Pancreas (tissue), 10 donors: ENCODE measurements at regions of chr5 and their contacts with region 1.

Region 1: GRCh38 chr5:54243473-54244080 is 66.8 kb downstream of the ARL15 start:
- DNase-seq: peak in 1 of 6 donors; percentile 16
- ATAC-seq: peak in 3 of 4 donors; percentile 57 to 83 (median 65)
- H3K4me3 ChIP-seq: no peak overlapping the region
- H3K27ac ChIP-seq: no peak overlapping the region
- H3K4me1 ChIP-seq: no peaks in the 10 kb centered on the region
- H3K27me3 ChIP-seq: no peaks in the 10 kb centered on the region
- CTCF ChIP-seq: peak; percentile 11 to 56 (median 46)

Region 2: DNA sequence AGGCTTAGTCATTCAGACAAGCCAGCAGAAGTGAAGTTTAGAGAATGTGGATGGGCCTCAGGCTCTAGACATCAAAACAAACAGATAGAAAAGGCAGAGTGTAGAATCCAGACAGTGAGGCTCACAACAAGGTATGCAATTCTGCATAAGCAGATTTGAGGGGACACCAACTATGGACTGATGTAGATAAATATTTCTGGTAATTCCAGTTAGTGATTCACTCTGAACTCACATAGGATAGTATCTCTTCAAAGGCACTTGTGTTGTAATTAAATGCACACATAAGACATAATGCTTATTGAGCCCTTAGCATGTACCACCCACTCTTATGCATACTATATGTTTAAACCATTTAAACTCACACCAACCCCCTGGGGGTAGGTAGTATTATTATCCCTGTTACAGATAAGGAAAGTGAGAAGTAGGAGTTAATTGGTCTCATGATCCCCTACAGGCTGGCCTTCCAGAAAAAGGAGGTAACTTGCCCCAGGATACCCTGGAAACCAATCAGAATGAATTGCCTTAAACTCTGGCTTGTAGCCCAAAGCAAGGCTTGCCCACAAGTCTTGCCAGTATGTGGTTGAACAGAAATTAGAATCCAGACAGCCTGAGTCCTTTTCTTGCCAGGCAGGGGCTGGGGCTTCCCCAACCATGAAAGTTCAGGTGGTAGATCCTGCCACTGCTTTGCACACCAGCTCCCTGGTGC is 172.5 kb after region 1 on chr5:
- intact Hi-C with region 1: loop called in 2 of 3 experiments (anchors 10 kb)
- DNase-seq: no peak
- ATAC-seq: no peak
- H3K4me3 ChIP-seq: no peak overlapping the region
- H3K27ac ChIP-seq: no peak overlapping the region
- H3K4me1 ChIP-seq: no peaks in the 10 kb centered on the region
- H3K27me3 ChIP-seq: no peaks in the 10 kb centered on the region
- CTCF ChIP-seq: no peak

Region 3: DNA sequence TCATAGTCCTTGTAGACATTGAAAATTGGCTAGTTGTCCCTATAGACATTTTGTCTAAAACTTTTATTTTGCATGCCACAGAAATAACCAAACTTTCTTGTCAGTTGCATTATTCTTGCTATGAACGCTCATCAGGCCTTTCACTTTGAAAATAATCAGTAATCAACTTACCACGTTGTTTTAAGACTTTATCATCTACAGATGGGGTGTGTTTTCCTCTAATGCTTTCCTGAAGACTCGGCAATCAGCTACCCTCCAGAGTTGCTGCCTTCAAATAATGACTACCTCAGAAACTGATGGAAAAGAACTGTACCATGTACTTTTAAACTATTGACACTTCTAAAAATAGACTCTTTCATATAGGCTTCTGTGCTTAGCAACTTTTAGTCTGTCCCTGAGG is 178.4 kb after region 1 on chr5:
- intact Hi-C with region 1: loop called in 2 of 3 experiments (anchors 10 kb)
- DNase-seq: no peak
- ATAC-seq: no peak
- H3K4me3 ChIP-seq: no peak overlapping the region
- H3K27ac ChIP-seq: no peak overlapping the region
- H3K4me1 ChIP-seq: no peaks in the 10 kb centered on the region
- H3K27me3 ChIP-seq: no peaks in the 10 kb centered on the region
- CTCF ChIP-seq: no peak